ENCODE measurements at regions of chr3 and their contacts with region 1.

Region 1: DNA sequence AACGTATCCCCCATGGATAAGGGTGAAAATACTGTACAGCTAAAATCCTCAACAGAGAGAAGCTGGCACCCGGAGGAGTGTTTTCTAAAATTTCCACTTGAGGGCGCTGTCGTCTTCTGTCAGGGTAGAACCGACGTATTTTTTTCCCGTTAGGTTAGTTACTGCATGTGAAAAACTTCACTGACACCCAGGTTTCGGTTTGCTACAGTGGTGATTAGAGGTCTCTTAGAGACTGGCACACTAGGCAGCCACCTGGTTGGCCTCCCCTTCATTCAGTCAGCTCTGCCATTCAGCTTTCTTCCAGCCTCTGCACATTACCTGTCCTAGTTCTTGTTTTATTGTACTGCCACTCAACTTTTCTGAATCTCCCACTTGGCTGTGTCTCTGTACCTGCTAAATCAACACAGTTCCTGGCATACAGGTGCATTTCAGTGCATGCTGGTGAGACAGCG is 18.4 kb downstream of the CCK start:
- DNase-seq: no peak
- ATAC-seq: peak; percentile 70; the same call in 1 of the 2 replicates
- H3K4me3 ChIP-seq: no peak overlapping the region
- H3K27ac ChIP-seq: no peak overlapping the region
- H3K4me1 ChIP-seq: no peaks in the 10 kb centered on the region
- H3K27me3 ChIP-seq: no peaks in the 10 kb centered on the region; the same call in 1 of the 2 replicates
- CTCF ChIP-seq: peak; percentile 79

Region 2: DNA sequence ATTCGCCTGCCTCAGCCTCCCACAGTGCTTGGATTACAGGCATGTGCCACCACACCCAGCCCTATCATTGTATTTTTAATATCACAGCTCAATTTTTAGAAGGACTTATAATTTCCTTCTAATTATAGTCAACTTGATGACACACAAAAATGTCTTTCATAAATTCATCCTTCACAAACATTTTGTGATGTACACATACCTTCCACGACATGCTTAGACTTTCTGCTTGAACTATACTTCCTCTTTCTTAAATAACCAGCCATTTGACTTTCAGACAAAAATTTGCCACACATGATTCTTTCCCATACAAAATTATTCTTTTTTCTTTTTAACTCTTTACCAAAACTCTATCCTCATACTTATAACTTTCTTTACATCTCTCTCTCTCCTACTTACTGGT is 66.8 kb after region 1 on chr3:
- CTCF ChIA-PET with region 1: no interaction called
- POLR2A ChIA-PET with region 1: interaction called, 19 read pairs
- in situ Hi-C with region 1: no loop called
- intact Hi-C with region 1: no loop called
- DNase-seq: no peak
- ATAC-seq: no peak
- H3K4me3 ChIP-seq: no peak overlapping the region
- H3K27ac ChIP-seq: no peak overlapping the region
- H3K4me1 ChIP-seq: no peaks in the 10 kb centered on the region
- H3K27me3 ChIP-seq: no peaks in the 10 kb centered on the region
- CTCF ChIP-seq: no peak

Region 3: GRCh38 chr3:42443819-42444436 is 196.3 kb after region 1 on chr3:
- CTCF ChIA-PET with region 1: interaction called, 15 read pairs
- POLR2A ChIA-PET with region 1: no interaction called
- in situ Hi-C with region 1: no loop called
- intact Hi-C with region 1: loop called (anchors 1 kb)
- DNase-seq: peak; percentile 52
- ATAC-seq: peak; percentile 99
- H3K4me3 ChIP-seq: no peak overlapping the region
- H3K27ac ChIP-seq: no peak overlapping the region
- H3K4me1 ChIP-seq: no peaks in the 10 kb centered on the region
- H3K27me3 ChIP-seq: no peaks in the 10 kb centered on the region
- CTCF ChIP-seq: peak; percentile 92

Region 4: DNA sequence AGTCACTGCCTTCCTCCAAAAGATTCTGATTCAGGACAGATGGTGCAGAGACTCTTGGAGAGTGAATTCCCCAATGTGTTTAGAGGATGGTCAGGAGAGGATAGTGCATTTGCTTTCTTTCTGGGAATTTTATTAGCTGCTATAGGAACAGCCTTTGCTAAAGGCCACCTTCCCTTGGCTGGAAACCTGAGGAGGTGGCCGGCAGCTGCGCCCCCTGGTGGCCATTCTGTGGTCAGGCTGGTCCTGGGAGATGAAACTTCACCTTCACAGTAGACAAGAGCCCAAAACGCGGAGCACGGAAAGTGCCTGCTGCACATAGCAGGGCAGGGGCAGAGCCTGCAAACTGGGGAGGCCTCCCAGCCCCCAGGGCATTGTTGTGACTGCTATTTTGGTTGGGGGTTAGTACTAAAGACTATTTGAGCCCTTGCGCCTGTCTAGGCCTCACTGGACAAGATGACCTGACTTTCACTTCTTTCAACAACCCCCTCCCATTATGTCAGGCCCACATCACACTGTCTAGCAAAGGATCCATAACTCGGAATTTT is 299.9 kb after region 1 on chr3:
- CTCF ChIA-PET with region 1: interaction called, 3 read pairs
- POLR2A ChIA-PET with region 1: no interaction called
- in situ Hi-C with region 1: no loop called
- intact Hi-C with region 1: loop called (anchors 5 kb)
- DNase-seq: peak; percentile 36
- ATAC-seq: peak; percentile 86
- H3K4me3 ChIP-seq: no peak overlapping the region
- H3K27ac ChIP-seq: no peak overlapping the region
- H3K4me1 ChIP-seq: no peaks in the 10 kb centered on the region; the same call in 1 of the 2 replicates
- H3K27me3 ChIP-seq: no peaks in the 10 kb centered on the region
- CTCF ChIP-seq: peak; percentile 93